Breast epithelium (tissue), 4 donors: ENCODE measurements at regions of chr1 and their contacts with region 1.

Region 1: GRCh38 chr1:10615932-10616671 is 141.4 kb downstream of the PEX14 start:
- DNase-seq: peak in 1 of 2 donors; percentile 25
- H3K4me3 ChIP-seq: no peak overlapping the region
- H3K27ac ChIP-seq: no peak overlapping the region
- H3K4me1 ChIP-seq: no peaks in the 10 kb centered on the region
- H3K27me3 ChIP-seq: no peaks in the 10 kb centered on the region
- CTCF ChIP-seq: no peak
- POLR2A ChIP-seq: no peak

Region 2: GRCh38 chr1:10665930-10666850 is 50.1 kb after region 1 on chr1:
- intact Hi-C with region 1: loop called (anchors 1 kb)
- DNase-seq: peak; percentile 87 to 92
- H3K4me3 ChIP-seq: no peak overlapping the region
- H3K27ac ChIP-seq: peak overlapping the region; percentile 80 to 85
- H3K4me1 ChIP-seq: peaks cover 0 to 17% of the 10 kb centered on the region in 2 donors
- H3K27me3 ChIP-seq: peaks cover 0 to 3% of the 10 kb centered on the region in 2 donors
- CTCF ChIP-seq: peak in 1 of 3 donors; percentile 5
- POLR2A ChIP-seq: no peak